Heart right ventricle (tissue), 16 donors: ENCODE measurements at regions of chr1 and their contacts with region 1.

Region 1: DNA sequence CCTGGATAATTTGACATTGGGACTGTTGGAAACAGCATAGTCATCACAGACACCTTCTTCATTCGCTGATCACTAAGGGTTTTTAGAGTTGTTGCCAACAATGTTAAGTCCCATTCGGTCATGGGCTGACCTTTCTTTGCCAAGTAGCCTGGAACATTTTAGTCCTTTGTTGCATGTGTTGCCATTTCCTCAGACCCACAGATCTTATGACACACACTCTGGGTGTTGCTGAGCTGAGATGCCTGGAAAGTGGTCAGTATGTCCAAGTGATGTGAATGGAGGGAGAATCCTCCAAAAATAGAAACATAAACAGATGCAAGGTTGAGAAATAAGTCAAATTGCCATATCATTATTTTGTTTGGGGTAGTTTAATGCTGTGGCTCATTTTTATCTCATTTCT is 61.5 kb upstream of the GJA5 start:
- DNase-seq: peak in 1 of 2 donors; percentile 41
- ATAC-seq: peak; percentile 89 to 98 (median 94)
- H3K4me3 ChIP-seq: no peak overlapping the region
- H3K27ac ChIP-seq: peak overlapping the region in 9 of 10 donors; percentile 43 to 80 (median 72)
- H3K4me1 ChIP-seq: peaks cover 0 to 29% (median 9%) of the 10 kb centered on the region in 9 donors
- H3K27me3 ChIP-seq: no peaks in the 10 kb centered on the region
- CTCF ChIP-seq: no peak

Region 2: DNA sequence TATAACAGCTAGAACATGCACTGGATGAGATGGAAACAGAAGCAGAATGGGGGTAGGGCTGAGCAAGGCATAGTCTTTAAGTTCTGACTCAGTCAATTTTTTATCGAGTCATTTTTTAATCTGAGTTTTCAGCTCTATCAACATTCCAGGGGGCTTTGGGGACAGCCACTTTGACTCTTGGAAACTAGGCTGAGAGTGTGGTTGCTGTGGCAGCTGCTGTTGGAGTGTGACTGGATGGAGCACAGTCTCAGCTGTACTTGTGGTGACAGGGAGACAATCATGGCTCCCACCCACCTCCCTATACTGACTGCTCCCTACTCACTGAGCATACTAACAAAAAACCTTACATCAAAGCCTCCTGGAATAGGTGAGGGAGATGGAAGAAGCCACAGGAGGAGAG is 86.5 kb before region 1 on chr1:
- intact Hi-C with region 1: loop called in 3 of 10 experiments (anchors 5 to 10 kb)
- DNase-seq: no peak
- ATAC-seq: peak in 7 of 8 donors; percentile 45 to 75 (median 63)
- H3K4me3 ChIP-seq: no peak overlapping the region
- H3K27ac ChIP-seq: peak overlapping the region in 3 of 10 donors; percentile 6 to 60 (median 15)
- H3K4me1 ChIP-seq: peaks cover 0 to 35% (median 13%) of the 10 kb centered on the region in 9 donors
- H3K27me3 ChIP-seq: no peaks in the 10 kb centered on the region
- CTCF ChIP-seq: no peak

Region 3: GRCh38 chr1:147748676-147749350 is 73.1 kb before region 1 on chr1:
- intact Hi-C with region 1: loop called in 2 of 10 experiments (anchors 5 to 10 kb)
- DNase-seq: peak in 1 of 2 donors; percentile 48
- ATAC-seq: peak; percentile 87 to 96 (median 93)
- H3K4me3 ChIP-seq: no peak overlapping the region
- H3K27ac ChIP-seq: peak overlapping the region in 5 of 10 donors; percentile 16 to 76 (median 70)
- H3K4me1 ChIP-seq: peaks cover 0 to 16% (median 11%) of the 10 kb centered on the region in 9 donors
- H3K27me3 ChIP-seq: no peaks in the 10 kb centered on the region
- CTCF ChIP-seq: no peak

Region 4: DNA sequence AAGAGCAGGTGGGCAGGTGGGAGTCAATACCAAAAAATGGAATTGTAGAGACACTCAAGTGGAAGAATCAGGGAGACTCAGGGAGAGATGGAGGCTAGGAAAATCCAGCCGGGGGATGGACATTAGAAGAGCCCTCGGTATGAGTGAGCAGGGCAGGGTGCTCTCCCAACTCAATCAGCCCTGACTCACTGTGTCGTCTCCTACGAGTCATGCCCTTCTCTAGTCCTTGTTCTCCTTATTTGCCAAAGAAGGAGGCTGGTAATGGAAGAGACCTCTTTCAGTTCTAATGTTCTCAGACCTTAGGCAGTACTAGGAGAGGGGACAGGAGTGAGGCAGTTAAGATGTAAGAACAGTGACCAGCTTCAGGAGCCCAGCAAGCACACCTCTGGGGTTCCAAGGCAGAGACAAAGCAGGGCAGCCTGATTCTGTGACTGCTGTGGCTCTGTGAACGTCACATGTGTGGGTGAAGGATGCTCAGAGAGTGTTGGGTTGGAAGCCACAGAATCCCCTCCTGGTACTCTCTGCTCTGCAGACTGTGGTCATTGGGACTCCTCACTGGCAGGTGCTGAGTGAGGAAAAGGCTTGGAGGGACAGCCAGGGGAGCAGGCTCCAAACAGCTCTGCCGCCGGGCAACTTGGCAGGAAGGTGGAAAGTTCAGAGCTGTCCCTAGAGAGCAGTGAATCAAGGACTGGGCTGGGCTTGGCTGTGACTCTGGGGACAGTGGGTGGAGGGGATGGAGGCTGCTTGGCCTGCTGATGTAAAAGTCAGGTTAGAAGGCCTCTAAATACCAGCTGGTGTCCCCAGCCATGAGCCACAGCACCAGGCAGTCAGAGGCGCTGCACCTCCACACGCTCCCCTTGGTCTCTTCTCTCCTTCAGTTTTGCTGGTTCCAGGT is 50.4 kb before region 1 on chr1:
- intact Hi-C with region 1: loop called in 3 of 10 experiments (anchors 2 to 5 kb)
- DNase-seq: peak; percentile 77 to 79
- ATAC-seq: peak; percentile 84 to 98 (median 95)
- H3K4me3 ChIP-seq: peak overlapping the region in 9 of 10 donors; percentile 15 to 47 (median 31)
- H3K27ac ChIP-seq: peak overlapping the region in 8 of 10 donors; percentile 37 to 73 (median 62)
- H3K4me1 ChIP-seq: peaks cover 0 to 77% (median 50%) of the 10 kb centered on the region in 9 donors
- H3K27me3 ChIP-seq: no peaks in the 10 kb centered on the region
- CTCF ChIP-seq: no peak

Region 5: GRCh38 chr1:147878022-147878421 is 56.1 kb after region 1 on chr1:
- intact Hi-C with region 1: loop called in 2 of 10 experiments (anchors 5 to 10 kb)
- DNase-seq: no peak
- ATAC-seq: peak in 5 of 8 donors; percentile 25 to 44 (median 30)
- H3K4me3 ChIP-seq: no peak overlapping the region
- H3K27ac ChIP-seq: no peak overlapping the region
- H3K4me1 ChIP-seq: no peaks in the 10 kb centered on the region
- H3K27me3 ChIP-seq: no peaks in the 10 kb centered on the region
- CTCF ChIP-seq: no peak